ENCODE measurements at regions of chr20 and their contacts with region 1.

Region 1: GRCh38 chr20:48828022-48828743 is 384 bp upstream of the PREX1 start:
- DNase-seq: peak; percentile 82 to 89 (median 86)
- H3K4me3 ChIP-seq: peak overlapping the region in 1 of 2 donors; percentile 40
- H3K4me3 Mint-ChIP-seq: peak overlapping the region; percentile 87 to 94 (median 90)
- H3K27ac ChIP-seq: peak overlapping the region; percentile 35
- H3K27ac Mint-ChIP-seq: peak overlapping the region; percentile 82 to 95 (median 91)
- H3K4me1 ChIP-seq: peaks cover 30% of the 10 kb centered on the region
- H3K4me1 Mint-ChIP-seq: peaks cover 9 to 25% (median 16%) of the 10 kb centered on the region in 4 donors
- H3K27me3 ChIP-seq: no peaks in the 10 kb centered on the region
- H3K27me3 Mint-ChIP-seq: no peaks in the 10 kb centered on the region

Region 2: DNA sequence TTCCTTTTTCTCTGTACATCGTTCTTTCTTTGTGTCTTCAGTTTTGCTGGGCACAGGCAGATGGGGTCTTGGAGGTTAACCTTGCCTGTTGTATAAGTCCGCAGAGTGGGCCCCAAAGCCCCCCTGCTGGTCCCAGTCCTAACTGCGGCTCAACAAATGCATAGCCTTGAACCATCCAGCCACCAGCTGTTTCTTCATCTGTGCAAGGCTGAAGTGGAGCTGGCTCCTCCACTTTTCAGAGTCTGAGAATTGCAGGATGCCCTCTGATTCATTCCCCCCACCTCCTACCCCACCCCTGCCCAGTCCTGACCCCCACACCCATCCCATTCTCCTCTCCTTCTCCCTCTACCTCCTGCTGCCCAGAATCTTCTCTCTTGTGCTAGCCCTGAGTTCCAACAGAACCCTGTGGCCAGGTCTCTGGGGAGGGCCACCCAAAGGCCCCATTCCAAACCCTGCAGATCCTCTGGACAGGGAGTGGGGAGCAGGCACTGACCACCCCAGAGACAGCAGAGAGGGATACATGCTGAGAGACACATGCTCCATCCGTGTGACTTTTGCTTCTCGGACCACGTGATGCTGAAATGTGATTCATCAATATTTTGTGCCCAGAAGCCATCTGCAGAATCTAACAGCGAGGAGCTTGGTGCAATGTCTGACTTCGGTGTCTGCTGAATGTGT is 656.4 kb before region 1 on chr20:
- CTCF ChIA-PET with region 1: no interaction called
- POLR2A ChIA-PET with region 1: no interaction called
- intact Hi-C with region 1: no loop called
- DNase-seq: no peak
- H3K4me3 ChIP-seq: no peak overlapping the region
- H3K4me3 Mint-ChIP-seq: no peak overlapping the region
- H3K27ac ChIP-seq: no peak overlapping the region
- H3K27ac Mint-ChIP-seq: no peak overlapping the region
- H3K4me1 ChIP-seq: no peaks in the 10 kb centered on the region
- H3K4me1 Mint-ChIP-seq: no peaks in the 10 kb centered on the region
- H3K27me3 ChIP-seq: no peaks in the 10 kb centered on the region
- H3K27me3 Mint-ChIP-seq: peaks cover 8 to 12% of the 10 kb centered on the region in 2 donors

Region 3: GRCh38 chr20:48657475-48658470 is 170.4 kb before region 1 on chr20:
- CTCF ChIA-PET with region 1: interaction called, 7 read pairs
- POLR2A ChIA-PET with region 1: interaction called, 3 read pairs
- intact Hi-C with region 1: loop called (anchors 2 kb)
- DNase-seq: peak; percentile 64 to 74 (median 70)
- H3K4me3 ChIP-seq: no peak overlapping the region
- H3K4me3 Mint-ChIP-seq: peak overlapping the region in 2 of 8 donors; percentile 48 to 52
- H3K27ac ChIP-seq: no peak overlapping the region
- H3K27ac Mint-ChIP-seq: peak overlapping the region; percentile 22 to 87 (median 75)
- H3K4me1 ChIP-seq: no peaks in the 10 kb centered on the region
- H3K4me1 Mint-ChIP-seq: peaks cover 1 to 11% (median 7%) of the 10 kb centered on the region in 4 donors
- H3K27me3 ChIP-seq: no peaks in the 10 kb centered on the region
- H3K27me3 Mint-ChIP-seq: no peaks in the 10 kb centered on the region

Region 4: GRCh38 chr20:48738399-48739304 is 89.5 kb before region 1 on chr20:
- CTCF ChIA-PET with region 1: interaction called, 3 read pairs
- POLR2A ChIA-PET with region 1: interaction called, 16 read pairs
- intact Hi-C with region 1: no loop called
- DNase-seq: peak in 2 of 5 donors; percentile 28 to 74
- H3K4me3 ChIP-seq: no peak overlapping the region
- H3K4me3 Mint-ChIP-seq: peak overlapping the region in 7 of 8 donors; percentile 39 to 83 (median 61)
- H3K27ac ChIP-seq: peak overlapping the region; percentile 38
- H3K27ac Mint-ChIP-seq: peak overlapping the region; percentile 78 to 92 (median 88)
- H3K4me1 ChIP-seq: peaks cover 61% of the 10 kb centered on the region
- H3K4me1 Mint-ChIP-seq: peaks cover 39 to 68% (median 55%) of the 10 kb centered on the region in 4 donors
- H3K27me3 ChIP-seq: no peaks in the 10 kb centered on the region
- H3K27me3 Mint-ChIP-seq: no peaks in the 10 kb centered on the region

Region 5: GRCh38 chr20:48760403-48760983 is 67.7 kb before region 1 on chr20:
- CTCF ChIA-PET with region 1: interaction called, 4 read pairs
- POLR2A ChIA-PET with region 1: interaction called, 44 read pairs
- intact Hi-C with region 1: loop called (anchors 1 kb)
- DNase-seq: peak; percentile 82 to 92 (median 84)
- H3K4me3 ChIP-seq: peak overlapping the region; percentile 20 to 54
- H3K4me3 Mint-ChIP-seq: peak overlapping the region; percentile 70 to 89 (median 85)
- H3K27ac ChIP-seq: peak overlapping the region; percentile 86
- H3K27ac Mint-ChIP-seq: peak overlapping the region; percentile 87 to 99 (median 98)
- H3K4me1 ChIP-seq: peaks cover 87% of the 10 kb centered on the region
- H3K4me1 Mint-ChIP-seq: peaks cover 64 to 97% (median 82%) of the 10 kb centered on the region in 4 donors
- H3K27me3 ChIP-seq: no peaks in the 10 kb centered on the region
- H3K27me3 Mint-ChIP-seq: no peaks in the 10 kb centered on the region

Region 6: DNA sequence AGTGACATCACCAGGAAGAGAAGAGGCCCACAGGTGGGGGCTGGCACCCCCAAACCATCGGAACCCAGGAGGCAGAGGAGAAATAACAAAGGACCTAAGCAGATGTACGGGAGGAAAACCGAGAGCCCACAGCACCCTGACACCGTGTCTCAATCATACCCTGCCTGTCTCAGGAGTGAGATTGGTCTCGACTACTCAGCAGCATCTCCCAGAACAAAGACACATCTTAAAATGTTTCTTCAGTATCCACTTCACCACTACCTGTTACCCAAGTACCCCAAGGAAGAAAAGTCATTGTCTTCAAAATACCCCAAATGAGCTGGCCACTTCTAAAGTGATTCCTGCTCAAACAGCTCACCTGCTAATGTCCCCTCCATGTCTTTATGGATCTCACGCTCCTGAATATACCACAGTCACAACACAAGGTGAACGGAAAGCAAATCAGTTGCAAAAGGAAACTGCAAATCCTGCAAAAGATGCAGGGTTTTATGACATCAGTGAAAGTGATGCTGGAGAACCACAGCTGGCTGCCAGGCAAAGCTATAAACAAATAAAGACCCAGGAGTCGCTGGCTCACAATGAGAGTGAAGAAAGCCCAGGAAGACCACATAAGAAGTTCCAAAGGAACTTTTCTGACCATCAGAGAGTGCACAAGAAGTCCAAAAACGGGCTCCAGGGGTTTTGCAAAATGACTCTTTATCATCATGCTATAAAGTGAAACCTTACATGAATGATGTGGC is 44.5 kb before region 1 on chr20:
- CTCF ChIA-PET with region 1: no interaction called
- POLR2A ChIA-PET with region 1: interaction called, 11 read pairs
- intact Hi-C with region 1: no loop called
- DNase-seq: peak; percentile 55 to 80 (median 68)
- H3K4me3 ChIP-seq: no peak overlapping the region
- H3K4me3 Mint-ChIP-seq: no peak overlapping the region
- H3K27ac ChIP-seq: peak overlapping the region; percentile 59
- H3K27ac Mint-ChIP-seq: no peak overlapping the region
- H3K4me1 ChIP-seq: peaks cover 93% of the 10 kb centered on the region
- H3K4me1 Mint-ChIP-seq: peaks cover 0 to 55% (median 33%) of the 10 kb centered on the region in 4 donors
- H3K27me3 ChIP-seq: no peaks in the 10 kb centered on the region
- H3K27me3 Mint-ChIP-seq: no peaks in the 10 kb centered on the region

Region 7: GRCh38 chr20:48875911-48876640 is 47.9 kb after region 1 on chr20:
- CTCF ChIA-PET with region 1: interaction called, 7 read pairs
- POLR2A ChIA-PET with region 1: interaction called, 3 read pairs
- intact Hi-C with region 1: loop called (anchors 2 kb)
- DNase-seq: no peak
- H3K4me3 ChIP-seq: no peak overlapping the region
- H3K4me3 Mint-ChIP-seq: no peak overlapping the region
- H3K27ac ChIP-seq: no peak overlapping the region
- H3K27ac Mint-ChIP-seq: peak overlapping the region in 4 of 7 donors; percentile 18 to 59 (median 41)
- H3K4me1 ChIP-seq: peaks cover 7% of the 10 kb centered on the region
- H3K4me1 Mint-ChIP-seq: peaks cover 9 to 13% (median 9%) of the 10 kb centered on the region in 4 donors
- H3K27me3 ChIP-seq: no peaks in the 10 kb centered on the region
- H3K27me3 Mint-ChIP-seq: no peaks in the 10 kb centered on the region

Region 8: GRCh38 chr20:49046087-49046900 is 218.1 kb after region 1 on chr20 and contains the start of gene CSE1L:
- CTCF ChIA-PET with region 1: no interaction called
- POLR2A ChIA-PET with region 1: no interaction called
- intact Hi-C with region 1: loop called (anchors 10 kb)
- DNase-seq: peak; percentile 93 to 97 (median 94)
- H3K4me3 ChIP-seq: peak within 1 kb of the TSS; percentile 99 to 100
- H3K4me3 Mint-ChIP-seq: peak within 1 kb of the TSS; percentile 97 to 99 (median 98)
- H3K27ac ChIP-seq: peak within 1 kb of the TSS; percentile 87
- H3K27ac Mint-ChIP-seq: peak within 1 kb of the TSS; percentile 98 to 99 (median 99)
- H3K4me1 ChIP-seq: peaks cover 40% of the 10 kb centered on the region
- H3K4me1 Mint-ChIP-seq: peaks cover 24 to 49% (median 38%) of the 10 kb centered on the region in 4 donors
- H3K27me3 ChIP-seq: no peaks in the 10 kb centered on the region
- H3K27me3 Mint-ChIP-seq: no peaks in the 10 kb centered on the region
- total RNA-seq, gene CSE1L: 44.5 to 45.8 TPM

Measured in CD4-positive, alpha-beta memory T cell (primary cell).